T-cell (primary cell): ENCODE measurements at regions of chr3 and their contacts with region 1.

Region 1: DNA sequence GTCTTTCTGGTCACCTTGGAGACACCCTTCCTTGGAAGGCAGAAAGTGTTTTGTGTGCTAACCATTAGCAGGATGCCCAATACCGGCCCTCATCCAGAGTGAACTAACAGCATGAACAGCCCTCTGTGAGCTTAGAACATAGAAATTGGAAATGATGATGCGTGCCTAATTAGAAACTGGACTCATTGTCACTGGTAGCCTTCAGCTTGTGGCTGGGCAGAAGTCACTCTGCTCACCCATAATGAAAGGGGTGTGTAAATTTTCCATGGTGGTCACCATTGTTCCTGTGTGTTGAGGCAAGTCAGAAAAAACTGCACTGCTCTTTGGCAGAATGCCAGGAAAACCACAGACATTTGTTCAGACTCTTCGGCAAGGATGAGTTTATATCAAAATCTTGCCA is 74.7 kb upstream of the CNTN4 start:
- DNase-seq: no peak
- ATAC-seq: no peak
- H3K4me3 ChIP-seq: no peak overlapping the region
- H3K4me3 Mint-ChIP-seq: no peak overlapping the region
- H3K27ac ChIP-seq: no peak overlapping the region
- H3K27ac Mint-ChIP-seq: no peak overlapping the region
- H3K4me1 ChIP-seq: no peaks in the 10 kb centered on the region
- H3K4me1 Mint-ChIP-seq: no peaks in the 10 kb centered on the region
- H3K27me3 ChIP-seq: no peaks in the 10 kb centered on the region
- H3K27me3 Mint-ChIP-seq: no peaks in the 10 kb centered on the region

Region 2: GRCh38 chr3:1955750-1956149 is 68.2 kb before region 1 on chr3:
- CTCF ChIA-PET with region 1: no interaction called
- POLR2A ChIA-PET with region 1: interaction called in 1 of 2 experiments, 10 read pairs
- DNase-seq: no peak
- ATAC-seq: no peak
- H3K4me3 ChIP-seq: no peak overlapping the region
- H3K4me3 Mint-ChIP-seq: no peak overlapping the region
- H3K27ac ChIP-seq: no peak overlapping the region
- H3K27ac Mint-ChIP-seq: no peak overlapping the region
- H3K4me1 ChIP-seq: no peaks in the 10 kb centered on the region
- H3K4me1 Mint-ChIP-seq: no peaks in the 10 kb centered on the region
- H3K27me3 ChIP-seq: no peaks in the 10 kb centered on the region
- H3K27me3 Mint-ChIP-seq: no peaks in the 10 kb centered on the region